ENCODE measurements at regions of chr2 and their contacts with region 1.

Region 1: DNA sequence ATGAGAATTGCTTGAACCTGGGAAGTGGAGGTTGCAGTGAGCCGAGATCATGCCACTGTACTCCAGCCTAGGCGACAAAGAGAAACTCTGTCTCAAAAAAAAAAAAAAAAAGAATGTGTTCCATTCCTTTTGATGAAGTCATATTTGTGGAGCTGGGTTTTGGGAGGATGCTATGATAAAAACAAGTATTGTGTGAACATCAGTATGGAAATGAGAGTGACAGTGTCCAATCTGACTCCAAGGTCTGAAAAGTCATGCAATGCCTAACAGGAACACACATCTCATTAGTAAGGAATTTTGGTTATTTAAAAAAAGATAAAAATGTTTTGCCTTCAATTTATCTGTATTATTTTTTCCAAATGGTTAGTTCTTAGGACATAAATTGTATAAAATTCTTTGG is 11.8 kb downstream of the GCFC2 start:
- DNase-seq: no peak
- H3K4me3 ChIP-seq: no peak overlapping the region
- H3K27ac ChIP-seq: no peak overlapping the region
- H3K4me1 ChIP-seq: no peaks in the 10 kb centered on the region
- H3K27me3 ChIP-seq: no peaks in the 10 kb centered on the region
- CTCF ChIP-seq: no peak
- POLR2A ChIP-seq: no peak

Region 2: DNA sequence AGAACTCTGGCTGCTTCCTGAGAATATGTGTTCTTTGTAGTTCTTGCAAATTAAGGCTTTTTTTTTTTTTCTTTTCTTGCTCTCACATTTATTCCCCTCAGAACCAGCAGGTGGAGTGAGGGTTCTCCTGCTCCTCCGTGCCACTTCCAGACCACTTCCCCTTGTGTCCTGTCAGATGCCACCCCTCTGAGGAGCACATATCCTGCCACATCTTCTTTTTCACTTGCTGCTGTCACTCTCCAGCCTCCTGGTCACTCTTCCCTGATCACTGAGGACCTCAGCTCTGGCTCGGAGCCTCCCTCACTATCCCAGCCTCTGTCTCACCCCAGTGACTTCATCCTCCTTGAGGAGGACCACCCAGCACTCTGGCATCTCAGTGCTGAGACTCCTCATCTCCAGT is 600.1 kb before region 1 on chr2:
- intact Hi-C with region 1: loop called (anchors 5 kb)
- DNase-seq: no peak
- H3K4me3 ChIP-seq: no peak overlapping the region
- H3K27ac ChIP-seq: no peak overlapping the region
- H3K4me1 ChIP-seq: no peaks in the 10 kb centered on the region
- H3K27me3 ChIP-seq: no peaks in the 10 kb centered on the region
- CTCF ChIP-seq: no peak
- POLR2A ChIP-seq: no peak

Region 3: DNA sequence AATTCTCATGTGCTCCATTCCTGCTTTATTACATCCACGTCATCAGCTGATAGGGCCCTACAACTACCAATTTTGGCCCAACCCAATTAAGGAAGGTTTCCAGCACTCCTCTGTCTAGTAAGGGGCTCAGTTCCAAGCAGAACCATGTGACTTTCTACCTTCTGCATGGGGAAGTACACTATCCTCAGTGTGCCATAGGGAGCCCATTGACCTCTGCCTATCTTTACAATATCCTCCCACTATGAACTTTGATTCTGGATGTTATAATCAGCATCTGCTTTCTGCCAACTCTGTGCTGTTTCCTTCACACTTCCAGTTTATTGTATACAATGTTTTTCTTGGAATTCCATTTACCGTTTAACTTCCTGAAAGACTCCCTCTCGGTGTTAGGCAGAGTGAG is 65.7 kb after region 1 on chr2:
- intact Hi-C with region 1: no loop called
- DNase-seq: no peak
- H3K4me3 ChIP-seq: no peak overlapping the region
- H3K27ac ChIP-seq: no peak overlapping the region
- H3K4me1 ChIP-seq: no peaks in the 10 kb centered on the region
- H3K27me3 ChIP-seq: no peaks in the 10 kb centered on the region
- CTCF ChIP-seq: no peak
- POLR2A ChIP-seq: no peak